HepG2 (cell line): ENCODE measurements at regions of chr5 and their contacts with region 1.

Region 1: DNA sequence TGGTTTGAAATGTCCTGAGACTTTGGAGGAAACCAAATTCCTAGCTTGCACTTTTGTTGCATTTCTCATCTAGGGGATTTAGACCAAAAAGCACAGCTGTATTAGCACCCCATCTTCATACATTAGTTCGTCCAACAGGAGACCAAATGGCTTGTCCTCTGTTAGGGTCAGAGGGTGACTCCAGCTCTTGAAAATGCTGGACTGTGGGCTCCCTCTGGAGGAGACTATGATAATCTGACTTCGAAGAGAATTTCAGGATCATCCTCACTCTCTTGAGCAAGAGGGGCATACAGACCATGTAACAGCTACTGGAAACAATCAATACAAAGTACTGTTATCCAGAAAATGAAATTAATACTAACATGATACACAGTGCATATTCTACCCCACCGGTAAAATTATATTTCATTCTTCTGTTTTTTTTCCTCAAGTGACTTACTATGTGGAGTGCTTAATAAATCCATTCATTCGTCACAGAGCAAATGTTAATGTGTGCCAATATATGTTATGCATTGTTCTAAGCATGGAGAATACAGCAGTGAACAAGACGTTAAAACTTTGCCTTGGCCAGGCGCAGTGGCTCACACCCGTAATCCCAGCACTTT is 63.7 kb upstream of the PPP2CA start:
- DNase-seq: peak; percentile 84
- ATAC-seq: peak; percentile 99
- H3K4me3 ChIP-seq: no peak overlapping the region
- H3K27ac ChIP-seq: no peak overlapping the region
- H3K4me1 ChIP-seq: no peaks in the 10 kb centered on the region
- H3K27me3 ChIP-seq: no peaks in the 10 kb centered on the region
- CTCF ChIP-seq: peak; percentile 89
- EP300 ChIP-seq: no peak
- POLR2A ChIP-seq: no peak
- RAD21 ChIP-seq: peak; percentile 95

Region 2: DNA sequence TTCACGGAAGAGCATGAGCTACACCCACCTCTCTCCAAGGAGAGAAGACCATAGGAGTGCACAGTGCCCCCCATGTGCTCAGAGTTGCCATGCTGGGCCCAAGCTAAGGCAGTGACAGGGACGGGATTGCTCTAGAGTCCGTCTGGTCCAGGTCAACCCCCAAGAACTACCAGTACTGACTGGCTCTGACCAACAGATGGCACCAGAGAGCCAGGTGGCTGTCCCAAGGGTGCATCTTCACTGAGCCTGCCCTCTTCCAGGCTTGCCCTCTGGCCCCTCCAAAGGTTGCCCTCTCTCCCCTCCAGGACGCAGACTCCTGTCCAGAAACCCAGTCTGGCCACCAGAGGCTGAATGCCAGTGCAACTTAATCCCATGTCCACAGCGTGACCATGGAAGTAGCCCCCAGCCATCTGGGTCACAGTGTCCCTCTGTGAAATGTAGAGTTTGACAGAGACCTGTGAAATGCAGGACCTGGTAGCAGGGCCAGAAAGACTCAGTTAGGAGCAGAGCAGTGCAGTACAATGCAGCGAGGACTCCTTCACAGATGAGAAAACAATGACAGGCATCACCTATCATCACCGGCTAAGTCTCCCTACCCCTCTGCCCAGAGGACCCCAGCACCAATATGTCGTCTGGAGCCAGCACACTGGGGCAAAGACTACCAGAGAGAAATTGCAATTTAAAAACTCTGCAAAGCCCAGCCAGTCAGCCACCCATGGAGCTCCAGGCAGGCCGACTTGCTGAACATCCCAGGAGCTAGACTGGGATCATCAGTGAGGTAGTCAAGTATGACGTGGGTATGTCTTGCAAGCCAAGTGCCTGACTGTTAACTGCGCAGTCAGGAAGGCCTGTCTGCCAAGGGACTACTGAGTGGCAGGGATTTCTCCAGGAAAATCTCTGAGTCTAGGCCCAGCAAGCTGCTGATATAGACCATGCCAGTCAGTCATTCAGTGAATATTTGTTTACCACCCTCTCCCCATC is 105.2 kb before region 1 on chr5:
- CTCF ChIA-PET with region 1: interaction called, 48 read pairs
- POLR2A ChIA-PET with region 1: no interaction called
- in situ Hi-C with region 1: loop called (anchors 5 kb)
- intact Hi-C with region 1: loop called (anchors 1 kb)
- DNase-seq: peak; percentile 62
- ATAC-seq: peak; percentile 87
- H3K4me3 ChIP-seq: no peak overlapping the region
- H3K27ac ChIP-seq: no peak overlapping the region
- H3K4me1 ChIP-seq: peaks cover 30% of the 10 kb centered on the region
- H3K27me3 ChIP-seq: no peaks in the 10 kb centered on the region
- CTCF ChIP-seq: peak; percentile 97
- EP300 ChIP-seq: no peak
- POLR2A ChIP-seq: no peak
- RAD21 ChIP-seq: peak; percentile 88

Region 3: DNA sequence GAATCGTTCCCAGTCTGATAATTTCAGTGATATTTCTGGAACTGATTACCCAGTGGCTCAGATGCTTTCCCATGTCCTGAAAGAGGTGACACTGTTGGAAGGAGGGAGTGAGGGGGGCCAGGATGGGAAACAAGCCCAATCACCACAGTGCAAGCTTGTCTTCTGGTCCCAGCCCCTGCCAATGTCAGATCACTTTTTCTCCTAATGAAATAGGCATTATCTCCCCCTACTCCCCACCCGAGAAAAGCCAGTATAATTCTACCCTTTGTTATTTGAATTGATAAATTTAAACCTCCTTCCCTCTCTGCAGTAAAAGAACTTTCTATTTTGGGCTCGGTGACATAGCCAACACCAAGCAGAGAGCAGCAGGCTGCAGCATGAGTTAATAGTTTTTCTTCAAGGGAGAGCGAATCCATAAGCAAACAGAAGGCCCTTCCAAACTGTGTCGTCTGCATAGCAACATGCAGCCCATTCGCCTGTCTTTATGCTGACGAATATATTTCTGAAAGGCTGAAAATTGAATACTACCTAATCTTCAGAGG is 49.1 kb before region 1 on chr5:
- CTCF ChIA-PET with region 1: no interaction called
- POLR2A ChIA-PET with region 1: no interaction called
- in situ Hi-C with region 1: no loop called
- intact Hi-C with region 1: loop called (anchors 5 kb)
- DNase-seq: peak; percentile 44
- ATAC-seq: peak; percentile 65
- H3K4me3 ChIP-seq: peak overlapping the region in 2 of 3 experiments; percentile 37 to 38; a peak in 2 of 6 replicates
- H3K27ac ChIP-seq: no peak overlapping the region
- H3K4me1 ChIP-seq: peaks cover 44% of the 10 kb centered on the region
- H3K27me3 ChIP-seq: no peaks in the 10 kb centered on the region
- CTCF ChIP-seq: no peak
- EP300 ChIP-seq: no peak
- POLR2A ChIP-seq: no peak
- RAD21 ChIP-seq: no peak